ENCODE measurements at regions of chr11 and their contacts with region 1.

Region 1: GRCh38 chr11:106724293-106724892 is 293.9 kb downstream of the GUCY1A2 start:
- DNase-seq: no peak
- H3K4me3 ChIP-seq: no peak overlapping the region
- H3K27ac ChIP-seq: no peak overlapping the region
- H3K4me1 ChIP-seq: no peaks in the 10 kb centered on the region
- CTCF ChIP-seq: no peak

Region 2: DNA sequence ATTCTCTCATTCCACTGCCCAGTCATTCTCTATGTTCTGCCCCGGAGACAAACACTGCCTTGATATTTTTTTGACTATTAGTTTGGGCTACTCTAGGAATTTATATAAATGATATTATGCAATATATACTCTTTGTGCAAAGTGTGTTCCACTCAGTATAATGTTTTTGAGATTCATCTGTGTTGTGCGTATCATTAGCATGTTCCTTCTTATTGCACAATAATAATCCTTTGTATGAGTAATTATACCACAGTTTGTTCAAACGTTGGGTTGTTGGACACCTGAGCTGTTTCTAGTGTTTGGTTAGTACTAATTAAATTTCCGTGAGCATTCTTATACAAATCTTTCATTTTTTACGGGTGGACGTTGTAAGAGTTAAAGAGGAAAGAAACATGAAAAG is 96.7 kb before region 1 on chr11:
- CTCF ChIA-PET with region 1: no interaction called
- POLR2A ChIA-PET with region 1: no interaction called
- intact Hi-C with region 1: no loop called
- DNase-seq: no peak
- H3K4me3 ChIP-seq: no peak overlapping the region
- H3K27ac ChIP-seq: no peak overlapping the region
- H3K4me1 ChIP-seq: no peaks in the 10 kb centered on the region
- CTCF ChIP-seq: no peak

Region 3: DNA sequence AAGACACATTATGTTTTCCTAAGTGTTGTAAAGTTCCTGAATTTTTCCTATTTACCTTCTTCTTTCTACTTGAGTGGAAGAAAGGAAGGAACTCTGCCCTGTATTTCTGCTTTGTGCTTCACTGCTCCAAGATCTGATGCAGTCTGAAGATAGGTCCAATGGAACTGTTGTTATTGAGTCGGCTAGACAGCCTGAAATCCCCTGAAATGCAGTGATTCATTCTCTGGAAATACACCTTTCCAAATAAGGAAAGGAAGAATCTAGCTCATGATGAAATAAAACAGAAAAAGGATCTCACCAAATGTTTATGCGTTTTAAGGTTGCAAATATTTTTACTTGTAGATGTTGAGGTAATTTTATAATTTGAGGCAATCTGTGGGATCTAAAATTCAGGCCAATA is 28.9 kb before region 1 on chr11:
- CTCF ChIA-PET with region 1: no interaction called
- POLR2A ChIA-PET with region 1: no interaction called
- intact Hi-C with region 1: no loop called
- DNase-seq: no peak
- H3K4me3 ChIP-seq: no peak overlapping the region
- H3K27ac ChIP-seq: no peak overlapping the region
- H3K4me1 ChIP-seq: no peaks in the 10 kb centered on the region
- CTCF ChIP-seq: no peak

Region 4: GRCh38 chr11:106706355-106706754 is 18.0 kb before region 1 on chr11:
- CTCF ChIA-PET with region 1: no interaction called
- POLR2A ChIA-PET with region 1: no interaction called
- intact Hi-C with region 1: no loop called
- DNase-seq: no peak
- H3K4me3 ChIP-seq: no peak overlapping the region
- H3K27ac ChIP-seq: no peak overlapping the region
- H3K4me1 ChIP-seq: no peaks in the 10 kb centered on the region
- CTCF ChIP-seq: no peak

Region 5: DNA sequence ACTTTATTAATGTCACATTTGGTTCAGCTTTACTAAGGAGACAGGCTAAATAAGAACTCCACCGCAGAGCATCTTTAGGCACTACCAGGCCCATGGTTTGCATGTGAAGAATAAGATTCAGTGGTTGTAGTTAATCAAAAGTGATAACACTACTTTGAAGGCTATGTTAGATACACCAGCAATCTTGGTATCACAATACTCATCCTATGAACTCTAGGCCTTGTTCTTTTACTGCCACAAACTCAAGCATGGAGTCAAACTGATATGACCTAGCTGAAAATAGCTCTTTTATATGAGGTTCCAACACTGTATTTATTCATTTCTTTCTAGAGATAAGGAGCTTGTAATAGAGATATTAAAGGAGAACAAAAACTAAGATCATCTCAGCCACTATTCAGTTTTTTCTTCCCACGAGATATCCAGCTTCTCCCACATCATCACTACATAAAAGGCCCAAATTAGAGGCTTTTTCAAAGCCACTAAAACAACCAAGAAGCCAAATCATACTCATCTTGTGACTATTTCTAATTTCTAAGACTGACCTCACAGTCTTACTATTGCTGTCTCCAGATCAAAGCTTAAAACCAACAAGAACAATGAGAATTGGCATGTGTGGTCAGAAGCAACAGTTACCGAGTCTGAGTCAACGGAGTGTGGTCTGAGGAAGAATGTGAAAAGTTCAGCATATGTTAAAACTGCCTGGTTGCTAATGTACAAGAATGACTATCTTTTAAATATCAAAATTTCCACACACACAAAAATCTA is 319.0 kb after region 1 on chr11:
- CTCF ChIA-PET with region 1: no interaction called
- POLR2A ChIA-PET with region 1: interaction called, 3 read pairs
- intact Hi-C with region 1: loop called (anchors 5 kb)
- DNase-seq: no peak
- H3K4me3 ChIP-seq: no peak overlapping the region
- H3K27ac ChIP-seq: no peak overlapping the region
- H3K4me1 ChIP-seq: no peaks in the 10 kb centered on the region
- CTCF ChIP-seq: no peak

Measured in OCI-LY7 (cell line).